HCT116 (cell line): ENCODE measurements at regions of chr3 and their contacts with region 1.

Region 1: DNA sequence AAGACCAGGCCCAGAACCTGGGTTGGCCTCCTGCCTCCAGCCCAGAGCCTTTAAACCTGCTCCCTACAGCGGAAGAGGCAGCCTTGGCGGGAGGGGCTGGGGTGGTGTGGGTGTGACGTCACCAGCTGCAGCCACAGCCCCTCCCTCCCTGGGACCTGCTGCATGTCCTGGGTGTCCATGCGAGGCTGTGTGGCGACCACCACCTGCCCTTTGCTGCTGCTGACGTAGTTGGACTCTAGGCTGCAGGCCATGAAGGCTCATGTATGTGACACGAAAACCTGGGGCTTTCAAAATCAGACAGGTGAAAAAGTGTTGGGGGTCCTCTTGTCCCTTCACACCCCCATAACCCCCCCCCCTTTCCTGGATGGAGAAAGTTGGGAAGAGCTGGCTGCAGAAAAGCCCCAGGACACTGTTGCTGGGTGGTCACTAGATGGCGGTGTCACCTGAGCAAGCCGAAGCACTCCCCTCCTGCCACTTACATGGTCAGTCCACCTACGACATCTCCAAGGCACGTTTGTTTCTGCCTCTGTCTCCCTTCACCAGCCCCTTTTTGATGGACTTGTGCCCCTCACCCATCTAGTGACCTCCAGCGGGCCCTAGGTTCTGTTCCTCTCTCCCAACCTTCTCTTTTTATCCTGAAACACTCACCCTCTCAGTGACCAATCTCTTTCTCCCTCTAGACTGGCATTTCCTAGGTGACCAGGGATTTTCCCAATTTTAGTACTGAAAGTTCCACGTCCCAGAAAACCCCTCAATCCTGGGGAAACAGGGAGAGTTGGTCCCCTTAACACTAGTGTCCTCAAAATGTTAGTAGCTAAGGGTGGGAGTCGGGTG is 35.2 kb downstream of the SLC6A20 start:
- DNase-seq: peak; percentile 51
- ATAC-seq: peak; percentile 98
- H3K4me3 ChIP-seq: no peak overlapping the region
- H3K27ac ChIP-seq: no peak overlapping the region
- H3K4me1 ChIP-seq: peaks cover 10 to 18% of the 10 kb centered on the region in 2 experiments; a peak in 3 of 4 replicates
- H3K27me3 ChIP-seq: no peaks in the 10 kb centered on the region
- CTCF ChIP-seq: peak; percentile 86 to 89 (median 88)
- POLR2A ChIP-seq: no peak
- RAD21 ChIP-seq: peak; percentile 96

Region 2: DNA sequence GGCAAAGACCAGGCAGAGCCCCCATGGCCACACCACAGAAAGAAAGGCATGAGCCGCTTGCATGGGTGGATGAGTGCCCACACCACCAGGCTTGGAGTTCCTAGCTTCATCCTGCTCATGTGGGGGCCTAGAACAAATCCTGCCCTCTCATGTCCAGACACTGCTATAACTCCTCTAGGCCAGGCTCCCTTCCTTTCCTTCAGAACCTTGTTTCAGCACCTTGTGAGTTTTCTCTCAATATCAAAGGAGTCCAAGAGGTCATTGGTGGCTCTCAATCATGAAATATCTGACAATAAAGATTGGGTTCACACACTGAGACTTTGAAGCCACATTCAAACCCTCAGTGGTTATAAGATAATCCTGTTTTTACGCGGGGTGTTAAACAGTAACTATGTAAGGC is 22.6 kb after region 1 on chr3:
- CTCF ChIA-PET with region 1: no interaction called
- POLR2A ChIA-PET with region 1: no interaction called
- RAD21 ChIA-PET with region 1: no interaction called
- intact Hi-C with region 1: no loop called
- DNase-seq: no peak
- ATAC-seq: peak; percentile 72
- H3K4me3 ChIP-seq: no peak overlapping the region
- H3K27ac ChIP-seq: no peak overlapping the region
- H3K4me1 ChIP-seq: peaks cover 0 to 4% of the 10 kb centered on the region in 2 experiments; a peak in 1 of 4 replicates
- H3K27me3 ChIP-seq: no peaks in the 10 kb centered on the region
- CTCF ChIP-seq: 0 out of 6 replicates have a peak, but pooled peaks of 1 of the 3 experiments have one; percentile 8
- POLR2A ChIP-seq: no peak
- RAD21 ChIP-seq: no peak

Region 3: GRCh38 chr3:45832691-45833090 is 71.6 kb after region 1 on chr3:
- CTCF ChIA-PET with region 1: interaction called, 65 read pairs
- POLR2A ChIA-PET with region 1: no interaction called
- RAD21 ChIA-PET with region 1: interaction called, 3 to 14 read pairs
- intact Hi-C with region 1: loop called (anchors 1 kb)
- DNase-seq: peak; percentile 21
- ATAC-seq: peak; percentile 93
- H3K4me3 ChIP-seq: no peak overlapping the region
- H3K27ac ChIP-seq: no peak overlapping the region
- H3K4me1 ChIP-seq: no peaks in the 10 kb centered on the region
- H3K27me3 ChIP-seq: no peaks in the 10 kb centered on the region
- CTCF ChIP-seq: peak; percentile 37 to 73 (median 57)
- POLR2A ChIP-seq: no peak
- RAD21 ChIP-seq: peak; percentile 88

Region 4: GRCh38 chr3:45906681-45907407 is 145.7 kb after region 1 on chr3:
- CTCF ChIA-PET with region 1: no interaction called
- POLR2A ChIA-PET with region 1: no interaction called
- RAD21 ChIA-PET with region 1: no interaction called
- intact Hi-C with region 1: loop called (anchors 2 kb)
- DNase-seq: no peak
- ATAC-seq: peak; percentile 95
- H3K4me3 ChIP-seq: no peak overlapping the region
- H3K27ac ChIP-seq: no peak overlapping the region
- H3K4me1 ChIP-seq: no peaks in the 10 kb centered on the region
- H3K27me3 ChIP-seq: no peaks in the 10 kb centered on the region
- CTCF ChIP-seq: peak; percentile 43 to 59 (median 56); a peak in 4 of 6 replicates
- POLR2A ChIP-seq: no peak
- RAD21 ChIP-seq: peak; percentile 71

Region 5: DNA sequence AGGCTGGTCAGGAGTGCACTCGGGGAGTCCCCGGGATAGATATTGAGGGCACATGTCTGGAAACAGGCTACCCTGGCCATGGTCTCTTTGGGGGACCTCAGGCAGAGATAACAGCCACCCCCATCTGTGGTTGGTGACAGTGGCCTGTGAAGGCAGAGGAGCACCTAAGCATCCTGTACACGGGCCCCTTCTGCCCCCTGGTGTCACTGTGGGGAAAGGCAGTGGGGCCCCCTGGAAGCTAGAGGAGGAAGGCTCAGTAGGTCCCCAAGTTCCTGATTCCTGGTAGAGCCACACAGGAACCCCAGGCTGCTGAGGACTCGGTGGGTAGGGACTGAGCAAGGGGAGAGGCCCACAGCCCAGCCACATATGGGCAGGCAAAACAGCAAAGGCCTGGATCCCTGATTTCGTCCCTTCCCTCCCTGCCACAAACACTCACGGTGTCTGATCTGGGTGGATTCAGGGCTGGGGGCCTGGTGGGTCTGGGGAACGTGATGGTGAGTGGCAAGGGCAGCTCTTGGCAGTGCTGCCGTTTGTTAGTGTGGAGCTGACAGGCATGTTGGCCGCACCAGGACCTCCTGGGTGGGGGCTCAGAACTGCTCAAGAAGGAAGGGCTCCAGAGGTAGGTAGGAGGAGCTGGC is 168.1 kb after region 1 on chr3:
- CTCF ChIA-PET with region 1: interaction called, 4 read pairs
- POLR2A ChIA-PET with region 1: no interaction called
- RAD21 ChIA-PET with region 1: interaction called, 7 to 10 read pairs
- intact Hi-C with region 1: loop called (anchors 1 kb)
- DNase-seq: peak; percentile 10
- ATAC-seq: peak; percentile 98
- H3K4me3 ChIP-seq: no peak overlapping the region
- H3K27ac ChIP-seq: no peak overlapping the region
- H3K4me1 ChIP-seq: peaks cover under 1 to 5% of the 10 kb centered on the region in 2 experiments; a peak in 3 of 4 replicates
- H3K27me3 ChIP-seq: no peaks in the 10 kb centered on the region
- CTCF ChIP-seq: peak; percentile 69 to 83 (median 83)
- POLR2A ChIP-seq: no peak
- RAD21 ChIP-seq: peak; percentile 85

Region 6: GRCh38 chr3:46378426-46378942 is 617.4 kb after region 1 on chr3:
- CTCF ChIA-PET with region 1: interaction called, 4 read pairs
- POLR2A ChIA-PET with region 1: no interaction called
- RAD21 ChIA-PET with region 1: no interaction called
- intact Hi-C with region 1: loop called (anchors 10 kb)
- DNase-seq: peak; percentile 48
- ATAC-seq: peak; percentile 97
- H3K4me3 ChIP-seq: no peak overlapping the region
- H3K27ac ChIP-seq: no peak overlapping the region
- H3K4me1 ChIP-seq: peaks cover 0 to 3% of the 10 kb centered on the region in 2 experiments; a peak in 1 of 4 replicates
- H3K27me3 ChIP-seq: peaks cover 27% of the 10 kb centered on the region
- CTCF ChIP-seq: peak; percentile 66 to 92 (median 87)
- POLR2A ChIP-seq: no peak
- RAD21 ChIP-seq: peak; percentile 85